B cell (primary cell): ENCODE measurements at regions of chr11 and their contacts with region 1.

Region 1: GRCh38 chr11:68213555-68214174 is 569 bp upstream of the KMT5B start:
- DNase-seq: peak; percentile 98
- ATAC-seq: peak; percentile 50
- H3K4me3 ChIP-seq: peak overlapping the region; percentile 39 to 97 (median 82)
- H3K4me3 Mint-ChIP-seq: peak overlapping the region; percentile 93
- H3K27ac ChIP-seq: peak overlapping the region; percentile 51 to 91
- H3K27ac Mint-ChIP-seq: peak overlapping the region; percentile 92
- H3K4me1 ChIP-seq: peaks cover 47 to 49% of the 10 kb centered on the region in 2 donors
- H3K4me1 Mint-ChIP-seq: peaks cover 46% of the 10 kb centered on the region
- H3K27me3 ChIP-seq: peaks cover 0 to 6% (median 0%) of the 10 kb centered on the region in 4 experiments
- H3K27me3 Mint-ChIP-seq: no peaks in the 10 kb centered on the region
- CTCF ChIP-seq: no peak

Region 2: GRCh38 chr11:67439321-67439883 is 774.3 kb before region 1 on chr11:
- CTCF ChIA-PET with region 1: no interaction called
- POLR2A ChIA-PET with region 1: no interaction called
- intact Hi-C with region 1: no loop called
- DNase-seq: peak; percentile 50
- ATAC-seq: no peak
- H3K4me3 ChIP-seq: peak overlapping the region in 2 of 5 experiments; percentile 92 to 96
- H3K4me3 Mint-ChIP-seq: peak overlapping the region; percentile 88
- H3K27ac ChIP-seq: peak overlapping the region; percentile 22 to 88
- H3K27ac Mint-ChIP-seq: peak overlapping the region; percentile 92
- H3K4me1 ChIP-seq: peaks cover 68 to 85% of the 10 kb centered on the region in 2 donors
- H3K4me1 Mint-ChIP-seq: peaks cover 82% of the 10 kb centered on the region
- H3K27me3 ChIP-seq: no peaks in the 10 kb centered on the region
- H3K27me3 Mint-ChIP-seq: no peaks in the 10 kb centered on the region
- CTCF ChIP-seq: no peak

Region 3: DNA sequence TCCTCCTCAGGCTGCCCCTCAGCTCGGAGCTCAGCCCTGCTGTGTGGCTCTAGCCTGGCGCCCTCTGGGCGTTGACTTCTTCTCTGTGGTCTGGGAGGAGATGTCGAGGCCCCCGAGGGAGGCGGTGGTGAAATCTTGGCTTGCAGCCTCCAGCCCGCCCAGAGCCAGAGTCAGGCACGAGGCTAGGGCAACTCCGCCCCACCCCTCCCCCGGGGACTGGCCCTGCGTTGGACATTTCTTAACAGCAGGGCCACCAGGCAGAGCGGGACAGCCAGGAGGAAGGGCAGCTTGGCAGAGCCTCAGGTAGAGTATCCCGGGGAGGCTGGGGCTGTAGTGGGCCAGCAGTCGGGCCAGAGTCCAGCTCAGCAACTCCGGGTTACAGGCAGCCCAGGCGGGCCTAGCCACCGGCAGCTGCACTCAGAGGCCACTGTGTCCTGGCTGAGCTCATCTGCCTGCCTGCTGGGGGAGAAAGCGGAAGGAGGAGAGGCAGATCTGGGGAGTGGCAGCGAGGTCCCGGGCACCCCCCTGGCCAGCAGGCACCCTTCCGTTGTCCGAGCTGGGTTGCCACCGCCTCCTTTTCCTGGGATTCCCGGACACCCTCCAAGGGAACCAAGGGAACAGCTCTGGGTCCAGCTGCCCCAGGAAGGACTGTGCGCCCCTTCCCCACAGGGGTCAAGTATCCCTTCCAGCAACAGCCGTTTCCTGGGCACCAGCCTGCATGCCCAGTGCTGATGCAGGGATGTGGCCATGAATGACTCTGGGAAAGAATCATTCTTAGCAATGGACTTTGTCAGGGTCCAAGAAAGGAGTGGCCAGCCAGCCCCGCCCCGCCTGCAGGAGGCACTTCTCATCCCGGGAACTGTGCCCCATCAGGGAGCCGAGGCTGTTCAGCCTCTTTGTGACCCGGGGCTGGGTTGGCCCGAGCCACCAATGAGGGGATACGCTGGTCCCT is 203.3 kb before region 1 on chr11 and contains the start of gene ALDH3B1:
- CTCF ChIA-PET with region 1: interaction called, 72 read pairs
- POLR2A ChIA-PET with region 1: interaction called, 3 read pairs
- intact Hi-C with region 1: no loop called
- DNase-seq: peak; percentile 51
- ATAC-seq: peak; percentile 76
- H3K4me3 ChIP-seq: peak within 1 kb of the TSS in 4 of 5 experiments; percentile 0 to 41 (median 24)
- H3K4me3 Mint-ChIP-seq: peak within 1 kb of the TSS; percentile 76
- H3K27ac ChIP-seq: peak within 1 kb of the TSS; percentile 25 to 53
- H3K27ac Mint-ChIP-seq: peak within 1 kb of the TSS; percentile 86
- H3K4me1 ChIP-seq: peaks cover 45 to 59% of the 10 kb centered on the region in 2 donors
- H3K4me1 Mint-ChIP-seq: peaks cover 44% of the 10 kb centered on the region
- H3K27me3 ChIP-seq: no peaks in the 10 kb centered on the region
- H3K27me3 Mint-ChIP-seq: no peaks in the 10 kb centered on the region
- CTCF ChIP-seq: no peak
- total RNA-seq, gene ALDH3B1: 0.39 and 0.81 TPM in 2 replicates

Region 4: GRCh38 chr11:68121067-68121899 is 92.4 kb before region 1 on chr11 and contains the start of gene CHKA:
- CTCF ChIA-PET with region 1: interaction called, 3 read pairs
- POLR2A ChIA-PET with region 1: no interaction called
- intact Hi-C with region 1: loop called (anchors 1 kb)
- DNase-seq: peak; percentile 94
- ATAC-seq: peak; percentile 93
- H3K4me3 ChIP-seq: peak within 1 kb of the TSS; percentile 65 to 78 (median 66)
- H3K4me3 Mint-ChIP-seq: peak within 1 kb of the TSS; percentile 95
- H3K27ac ChIP-seq: peak within 1 kb of the TSS; percentile 82 to 86
- H3K27ac Mint-ChIP-seq: peak within 1 kb of the TSS; percentile 95
- H3K4me1 ChIP-seq: peaks cover 21 to 29% of the 10 kb centered on the region in 2 donors
- H3K4me1 Mint-ChIP-seq: peaks cover 27% of the 10 kb centered on the region
- H3K27me3 ChIP-seq: no peaks in the 10 kb centered on the region
- H3K27me3 Mint-ChIP-seq: no peaks in the 10 kb centered on the region
- CTCF ChIP-seq: no peak
- total RNA-seq, gene CHKA: 20.6 and 24.9 TPM in 2 replicates

Region 5: DNA sequence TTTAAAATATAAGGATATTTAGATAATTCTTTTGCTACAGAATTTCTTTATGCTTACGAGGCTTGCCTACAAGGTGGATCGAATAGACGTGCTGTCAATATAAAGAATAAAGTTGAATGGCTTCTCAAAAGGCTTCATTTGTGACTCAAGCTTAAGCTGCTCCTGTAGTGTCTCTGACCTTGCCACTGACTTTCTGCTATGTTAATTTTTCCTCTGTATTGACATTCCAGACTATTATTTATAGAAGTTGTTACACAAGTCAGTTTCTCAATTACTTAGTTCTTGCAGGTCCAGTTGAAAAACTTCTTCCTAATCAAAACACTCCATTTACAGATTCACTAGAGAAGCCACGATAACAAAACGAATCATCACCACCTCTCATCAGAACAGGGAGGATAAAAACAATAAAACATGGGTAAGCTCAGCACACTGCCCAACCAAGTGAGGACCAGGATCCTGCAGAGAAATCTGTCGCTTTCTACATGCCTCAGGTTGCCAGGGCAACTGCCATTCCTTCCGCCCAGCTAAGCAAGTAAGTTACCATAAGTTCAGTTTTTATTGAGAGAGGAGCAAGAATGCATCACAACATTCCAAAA is 53.5 kb before region 1 on chr11:
- CTCF ChIA-PET with region 1: no interaction called
- POLR2A ChIA-PET with region 1: no interaction called
- intact Hi-C with region 1: no loop called
- DNase-seq: no peak
- ATAC-seq: no peak
- H3K4me3 ChIP-seq: no peak overlapping the region
- H3K4me3 Mint-ChIP-seq: no peak overlapping the region
- H3K27ac ChIP-seq: no peak overlapping the region
- H3K27ac Mint-ChIP-seq: peak overlapping the region; percentile 0
- H3K4me1 ChIP-seq: no peaks in the 10 kb centered on the region
- H3K4me1 Mint-ChIP-seq: no peaks in the 10 kb centered on the region
- H3K27me3 ChIP-seq: no peaks in the 10 kb centered on the region
- H3K27me3 Mint-ChIP-seq: no peaks in the 10 kb centered on the region
- CTCF ChIP-seq: no peak

Region 6: DNA sequence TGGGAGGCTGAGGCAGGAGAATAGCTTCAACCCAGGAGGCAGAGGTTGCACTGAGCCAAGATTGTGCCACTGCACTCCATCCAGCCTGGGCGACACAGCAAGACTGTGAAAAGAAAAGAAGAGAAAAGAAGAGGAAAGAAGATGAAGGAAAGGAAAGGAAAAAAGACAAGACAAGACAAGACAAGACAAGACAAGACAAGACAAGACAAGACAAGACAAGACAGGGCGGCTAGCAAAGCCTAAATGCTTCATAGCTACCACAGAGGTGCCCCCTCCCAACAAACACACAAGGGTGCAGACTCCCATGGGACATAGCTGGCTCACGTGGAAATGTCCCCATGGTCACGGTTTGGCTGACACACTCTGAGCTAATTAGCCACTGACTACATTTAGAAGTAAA is 15.4 kb before region 1 on chr11:
- CTCF ChIA-PET with region 1: interaction called, 11 read pairs
- POLR2A ChIA-PET with region 1: no interaction called
- intact Hi-C with region 1: no loop called
- DNase-seq: no peak
- ATAC-seq: peak; percentile 45
- H3K4me3 ChIP-seq: no peak overlapping the region
- H3K4me3 Mint-ChIP-seq: peak overlapping the region; percentile 6
- H3K27ac ChIP-seq: no peak overlapping the region
- H3K27ac Mint-ChIP-seq: no peak overlapping the region
- H3K4me1 ChIP-seq: peaks cover 20 to 53% of the 10 kb centered on the region in 2 donors
- H3K4me1 Mint-ChIP-seq: peaks cover 69% of the 10 kb centered on the region
- H3K27me3 ChIP-seq: no peaks in the 10 kb centered on the region
- H3K27me3 Mint-ChIP-seq: no peaks in the 10 kb centered on the region
- CTCF ChIP-seq: no peak

Region 7: GRCh38 chr11:68266121-68266891 is 52.6 kb after region 1 on chr11:
- CTCF ChIA-PET with region 1: interaction called, 11 read pairs
- POLR2A ChIA-PET with region 1: interaction called, 11 read pairs
- intact Hi-C with region 1: no loop called
- DNase-seq: peak; percentile 72
- ATAC-seq: peak; percentile 73
- H3K4me3 ChIP-seq: peak overlapping the region in 4 of 5 experiments; percentile 0 to 37 (median 31)
- H3K4me3 Mint-ChIP-seq: peak overlapping the region; percentile 73
- H3K27ac ChIP-seq: peak overlapping the region; percentile 64 to 83
- H3K27ac Mint-ChIP-seq: peak overlapping the region; percentile 93
- H3K4me1 ChIP-seq: peaks cover 62 to 68% of the 10 kb centered on the region in 2 donors
- H3K4me1 Mint-ChIP-seq: peaks cover 76% of the 10 kb centered on the region
- H3K27me3 ChIP-seq: no peaks in the 10 kb centered on the region
- H3K27me3 Mint-ChIP-seq: no peaks in the 10 kb centered on the region
- CTCF ChIP-seq: no peak

Region 8: DNA sequence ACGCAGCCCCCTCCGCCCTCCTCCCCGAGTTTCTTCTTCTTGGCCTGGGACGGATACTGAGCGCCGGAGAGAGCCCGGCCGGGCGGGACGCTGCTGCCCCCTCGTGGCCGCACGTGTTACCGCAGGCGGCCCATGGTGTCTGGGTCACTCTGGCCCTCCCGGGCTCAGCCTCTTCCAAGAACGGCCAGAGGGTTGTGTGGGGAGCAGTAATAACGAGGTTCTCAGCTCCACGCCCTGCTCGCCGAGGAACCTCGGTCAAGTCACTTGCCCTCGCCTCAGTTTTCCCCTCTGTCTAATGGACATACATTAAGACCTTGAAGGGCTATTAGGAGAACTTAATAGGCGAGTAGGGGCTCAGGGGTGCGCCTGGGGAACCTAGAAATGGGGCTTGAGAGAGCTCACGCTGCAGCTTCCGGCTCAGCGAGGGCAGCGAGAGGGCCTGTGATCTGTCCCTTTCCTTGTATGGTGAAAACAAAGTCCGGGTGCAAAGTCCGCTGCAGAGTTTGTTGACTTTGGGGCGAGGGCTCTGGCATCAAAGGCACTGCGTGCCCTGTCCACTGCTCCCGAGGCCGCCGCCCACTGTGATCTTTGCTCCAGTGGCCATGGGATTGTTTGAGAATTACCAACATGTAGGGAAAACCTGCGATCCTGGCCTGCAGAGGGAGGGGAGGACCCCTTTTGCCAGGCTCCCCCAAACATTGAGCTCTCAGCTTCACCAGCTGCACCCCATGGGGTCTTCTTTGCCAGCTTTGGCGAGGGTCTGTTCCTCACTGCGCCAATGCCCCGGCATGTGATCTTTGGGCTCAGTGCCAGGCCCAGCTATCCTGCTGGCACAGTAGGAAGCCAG is 84.4 kb after region 1 on chr11:
- CTCF ChIA-PET with region 1: interaction called, 63 read pairs
- POLR2A ChIA-PET with region 1: no interaction called
- intact Hi-C with region 1: loop called (anchors 1 kb)
- DNase-seq: peak; percentile 85
- ATAC-seq: peak; percentile 95
- H3K4me3 ChIP-seq: no peak overlapping the region
- H3K4me3 Mint-ChIP-seq: peak overlapping the region; percentile 69
- H3K27ac ChIP-seq: no peak overlapping the region
- H3K27ac Mint-ChIP-seq: peak overlapping the region; percentile 67
- H3K4me1 ChIP-seq: peaks cover 40 to 45% of the 10 kb centered on the region in 2 donors
- H3K4me1 Mint-ChIP-seq: peaks cover 36% of the 10 kb centered on the region
- H3K27me3 ChIP-seq: no peaks in the 10 kb centered on the region
- H3K27me3 Mint-ChIP-seq: no peaks in the 10 kb centered on the region
- CTCF ChIP-seq: peak; percentile 95

Region 9: GRCh38 chr11:68447015-68447801 is 233.5 kb after region 1 on chr11:
- CTCF ChIA-PET with region 1: interaction called, 5 read pairs
- POLR2A ChIA-PET with region 1: no interaction called
- intact Hi-C with region 1: loop called (anchors 1 kb)
- DNase-seq: peak; percentile 84
- ATAC-seq: peak; percentile 99
- H3K4me3 ChIP-seq: no peak overlapping the region
- H3K4me3 Mint-ChIP-seq: no peak overlapping the region
- H3K27ac ChIP-seq: no peak overlapping the region
- H3K27ac Mint-ChIP-seq: no peak overlapping the region
- H3K4me1 ChIP-seq: peaks cover 5 to 13% of the 10 kb centered on the region in 2 donors
- H3K4me1 Mint-ChIP-seq: peaks cover 11% of the 10 kb centered on the region
- H3K27me3 ChIP-seq: no peaks in the 10 kb centered on the region
- H3K27me3 Mint-ChIP-seq: no peaks in the 10 kb centered on the region
- CTCF ChIP-seq: peak; percentile 93